Ovary (tissue), 10 donors: ENCODE measurements at regions of chr4 and their contacts with region 1.

Region 1: GRCh38 chr4:95107635-95108034 is 349.9 kb downstream of the BMPR1B start:
- DNase-seq: peak in 1 of 5 donors; percentile 17
- H3K4me3 ChIP-seq: no peak overlapping the region
- H3K27ac ChIP-seq: no peak overlapping the region
- H3K4me1 ChIP-seq: no peaks in the 10 kb centered on the region
- H3K27me3 ChIP-seq: no peaks in the 10 kb centered on the region
- CTCF ChIP-seq: no peak
- EP300 ChIP-seq: no peak
- POLR2A ChIP-seq: no peak

Region 2: GRCh38 chr4:94621491-94622080 is 486.0 kb before region 1 on chr4:
- intact Hi-C with region 1: loop called in 2 of 4 experiments (anchors 10 kb)
- DNase-seq: peak in 1 of 5 donors; percentile 25
- H3K4me3 ChIP-seq: no peak overlapping the region
- H3K27ac ChIP-seq: peak overlapping the region in 1 of 2 donors; percentile 29
- H3K4me1 ChIP-seq: no peaks in the 10 kb centered on the region
- H3K27me3 ChIP-seq: no peaks in the 10 kb centered on the region
- CTCF ChIP-seq: peak; percentile 61 to 77 (median 65)
- EP300 ChIP-seq: no peak
- POLR2A ChIP-seq: no peak

Region 3: DNA sequence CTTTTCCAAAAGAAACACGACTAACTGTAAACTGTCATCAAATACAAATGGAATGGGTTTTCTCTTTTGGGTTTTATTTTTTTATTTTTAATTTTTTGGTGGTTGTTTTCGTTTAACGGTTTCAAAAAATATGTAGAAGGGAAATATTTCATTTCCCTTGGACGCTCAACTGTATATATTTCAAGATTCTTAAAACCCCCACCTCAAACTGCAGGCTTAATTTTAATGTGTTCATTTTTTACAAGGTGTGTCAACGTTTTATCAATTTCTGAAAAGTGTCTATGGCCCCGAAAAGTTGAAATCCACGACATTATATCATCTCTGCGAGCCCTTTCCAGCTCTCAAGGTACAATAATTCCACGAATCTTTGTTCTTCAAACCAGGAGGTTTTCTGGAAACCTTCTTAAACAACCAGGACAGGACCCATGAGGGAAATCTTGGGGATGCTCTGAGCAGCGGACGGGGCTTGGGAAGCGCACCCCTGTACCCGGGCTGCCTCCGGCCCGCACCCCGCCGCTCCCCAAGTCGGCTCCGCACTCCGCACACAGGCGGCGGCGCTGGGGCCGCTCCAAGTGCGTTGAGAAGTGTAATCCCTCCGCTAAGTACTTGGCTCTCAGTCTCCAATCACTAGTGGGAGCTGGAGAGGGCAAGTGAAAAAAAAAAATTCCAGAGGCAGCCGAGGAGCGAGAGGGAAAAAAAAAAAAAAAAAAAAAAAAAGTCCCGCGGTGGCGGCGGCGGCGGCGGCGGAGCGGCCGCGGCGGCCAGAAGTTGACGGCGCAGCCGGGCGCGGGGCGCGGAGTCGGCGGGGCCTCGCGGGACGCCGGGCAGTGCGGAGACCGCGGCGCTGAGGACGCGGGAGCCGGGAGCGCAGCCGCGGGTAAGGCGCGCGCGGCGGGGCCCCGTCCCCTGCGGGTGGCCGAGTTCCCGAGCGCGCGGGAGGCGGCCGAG is 350.2 kb before region 1 on chr4 and contains the start of gene BMPR1B:
- intact Hi-C with region 1: loop called in 1 of 4 experiments (anchors 10 kb)
- DNase-seq: peak; percentile 60 to 81 (median 70)
- H3K4me3 ChIP-seq: peak within 1 kb of the TSS; percentile 68
- H3K27ac ChIP-seq: peak within 1 kb of the TSS; percentile 88 to 98
- H3K4me1 ChIP-seq: no peaks in the 10 kb centered on the region
- H3K27me3 ChIP-seq: no peaks in the 10 kb centered on the region
- CTCF ChIP-seq: no peak
- EP300 ChIP-seq: no peak
- POLR2A ChIP-seq: no peak
- total RNA-seq, gene BMPR1B: 7.8 to 35.7 (median 17.0) TPM